ENCODE measurements at regions of chr10 and their contacts with region 1.

Region 1: DNA sequence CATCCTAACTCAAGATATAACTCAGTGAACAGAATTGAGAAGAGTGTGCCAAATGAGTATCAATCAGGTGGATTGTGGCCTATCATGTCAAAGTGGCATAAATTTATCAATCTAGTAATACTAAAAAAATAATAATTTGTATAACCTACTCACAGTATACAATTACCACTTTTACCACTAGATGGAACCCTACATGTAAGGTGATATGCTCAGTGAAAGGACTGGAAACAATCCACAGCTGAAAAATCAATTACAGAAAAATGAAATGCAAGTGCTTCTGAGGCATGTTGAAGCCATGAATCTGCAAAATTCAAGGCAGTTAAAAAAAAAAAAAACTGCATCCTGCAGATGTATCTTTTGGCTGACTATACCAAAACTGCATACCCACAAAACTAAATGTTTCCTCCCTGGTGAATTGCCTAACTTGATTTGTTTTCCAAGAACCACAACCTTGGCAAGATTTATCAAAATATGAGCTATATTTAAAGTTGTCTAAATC is 13.9 kb downstream of the ARHGAP19 start:
- DNase-seq: no peak
- ATAC-seq: peak; percentile 50; the same call in 1 of the 2 replicates
- H3K4me3 Mint-ChIP-seq: no peak overlapping the region
- H3K27ac Mint-ChIP-seq: no peak overlapping the region
- H3K4me1 Mint-ChIP-seq: 0 out of 2 replicates have a peak, but pooled peaks cover 4% of the 10 kb centered on the region
- H3K27me3 Mint-ChIP-seq: no peaks in the 10 kb centered on the region
- CTCF ChIP-seq: 0 out of 2 replicates have a peak, but pooled peaks have one; percentile 25

Region 2: GRCh38 chr10:97255512-97256293 is 22.8 kb before region 1 on chr10:
- CTCF ChIA-PET with region 1: no interaction called
- POLR2A ChIA-PET with region 1: no interaction called
- DNase-seq: no peak
- ATAC-seq: no peak; the same call in 1 of the 2 replicates
- H3K4me3 Mint-ChIP-seq: no peak overlapping the region
- H3K27ac Mint-ChIP-seq: no peak overlapping the region; the same call in 1 of the 2 replicates
- H3K4me1 Mint-ChIP-seq: no peaks in the 10 kb centered on the region; the same call in 1 of the 2 replicates
- H3K27me3 Mint-ChIP-seq: no peaks in the 10 kb centered on the region
- CTCF ChIP-seq: no peak

Region 3: DNA sequence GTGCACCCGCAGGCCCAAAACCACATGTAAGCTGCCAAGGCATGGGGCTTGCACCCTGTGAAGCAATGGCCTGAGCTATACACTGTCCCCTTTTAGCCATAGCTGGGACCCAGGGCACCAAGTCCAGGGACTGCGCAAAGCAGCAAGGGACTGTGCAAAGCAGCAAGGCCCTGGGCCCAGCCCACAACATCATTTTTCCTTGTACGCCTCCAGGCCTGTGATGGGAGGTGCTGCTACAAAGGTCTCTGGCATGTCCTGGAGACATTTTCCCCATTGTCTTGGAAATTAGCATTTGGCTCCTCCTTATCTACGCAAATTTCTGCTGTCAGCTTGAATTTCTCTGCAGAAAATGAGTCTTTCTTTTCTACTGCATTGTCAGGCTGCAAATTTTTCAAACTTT is 10.9 kb before region 1 on chr10:
- CTCF ChIA-PET with region 1: interaction called, 12 read pairs
- POLR2A ChIA-PET with region 1: no interaction called
- DNase-seq: peak; percentile 36
- ATAC-seq: peak; percentile 83
- H3K4me3 Mint-ChIP-seq: peak overlapping the region; percentile 26
- H3K27ac Mint-ChIP-seq: peak overlapping the region; percentile 65
- H3K4me1 Mint-ChIP-seq: peaks cover 33% of the 10 kb centered on the region
- H3K27me3 Mint-ChIP-seq: no peaks in the 10 kb centered on the region
- CTCF ChIP-seq: no peak

Region 4: DNA sequence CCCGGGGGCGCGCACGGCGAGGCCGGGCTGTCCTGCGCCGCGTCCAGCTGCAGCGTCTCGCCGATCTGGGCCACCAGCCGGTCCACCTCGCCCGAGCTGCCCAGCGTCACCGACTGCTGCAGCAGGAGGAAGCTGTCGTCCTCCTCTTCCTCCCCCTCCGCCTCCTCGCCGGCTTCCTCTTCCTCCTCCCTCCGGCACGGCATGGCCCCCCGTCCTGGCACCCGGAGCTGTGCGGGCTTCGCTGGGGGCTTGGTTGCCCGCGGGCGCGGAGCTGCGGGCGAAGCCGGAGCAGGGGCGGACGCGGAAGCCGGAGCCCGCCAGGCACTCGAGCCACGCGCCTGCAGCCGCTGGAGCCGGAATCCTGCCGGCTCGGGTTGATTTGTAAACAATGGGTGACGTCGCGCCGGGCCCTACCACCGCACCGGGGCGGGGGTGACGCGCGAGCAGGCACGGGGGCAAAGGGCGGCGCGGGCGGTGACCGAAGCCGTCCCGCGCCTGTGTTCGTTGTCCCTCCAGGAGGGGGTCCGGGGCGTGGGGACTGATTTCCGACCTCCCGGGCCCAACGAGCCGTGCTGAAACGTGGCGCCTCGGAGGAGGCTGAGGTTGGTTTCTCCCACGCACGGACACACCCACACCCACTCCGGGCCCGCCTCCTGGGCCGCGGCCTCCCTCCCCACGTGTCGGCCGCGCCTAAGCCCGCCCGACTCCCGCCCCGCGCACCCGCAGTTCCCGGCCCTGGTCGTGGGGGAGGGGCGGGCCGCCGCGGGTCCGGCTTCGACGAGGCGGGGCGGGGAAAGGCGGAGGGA is 56.0 kb after region 1 on chr10 and contains the start of gene FRAT2:
- CTCF ChIA-PET with region 1: interaction called, 31 read pairs
- POLR2A ChIA-PET with region 1: no interaction called
- DNase-seq: peak; percentile 93
- ATAC-seq: peak; percentile 17
- H3K4me3 Mint-ChIP-seq: peak within 1 kb of the TSS; percentile 86
- H3K27ac Mint-ChIP-seq: peak within 1 kb of the TSS; percentile 97
- H3K4me1 Mint-ChIP-seq: peaks cover 62% of the 10 kb centered on the region
- H3K27me3 Mint-ChIP-seq: no peaks in the 10 kb centered on the region
- CTCF ChIP-seq: no peak
- total RNA-seq, gene FRAT2: 48.2 to 53.5 TPM (median 50.8 TPM) in 3 replicates

Region 5: GRCh38 chr10:97355571-97355975 is 77.0 kb after region 1 on chr10:
- CTCF ChIA-PET with region 1: interaction called, 13 read pairs
- POLR2A ChIA-PET with region 1: interaction called, 3 read pairs
- DNase-seq: peak; percentile 46
- ATAC-seq: peak; percentile 80
- H3K4me3 Mint-ChIP-seq: no peak overlapping the region
- H3K27ac Mint-ChIP-seq: peak overlapping the region; percentile 95
- H3K4me1 Mint-ChIP-seq: peaks cover 5% of the 10 kb centered on the region
- H3K27me3 Mint-ChIP-seq: no peaks in the 10 kb centered on the region
- CTCF ChIP-seq: no peak